K562 (cell line): ENCODE measurements at regions of chrX and their contacts with region 1.

Region 1: DNA sequence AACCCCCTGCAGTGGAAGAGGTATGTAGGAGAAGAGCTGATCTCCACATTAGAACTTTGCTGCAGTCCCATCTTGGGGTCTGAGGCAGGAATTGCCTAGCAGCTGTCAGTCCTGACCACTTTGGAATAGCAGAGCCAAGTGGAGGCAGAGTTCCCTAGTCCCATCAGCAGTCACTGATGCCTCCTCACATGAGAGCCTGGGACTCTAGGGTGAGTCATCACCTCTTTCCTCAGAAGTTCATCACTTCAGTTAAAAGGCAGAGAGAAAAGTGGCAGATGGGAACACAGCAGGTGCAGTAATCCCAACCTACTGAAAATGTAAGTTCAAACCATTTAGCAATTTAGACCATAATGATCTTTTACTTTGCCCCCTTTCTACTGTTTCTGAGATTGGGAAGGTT is 73.9 kb upstream of the MED14 start:
- DNase-seq: peak in 1 of 4 experiments; percentile 11
- ATAC-seq: no peak
- H3K4me3 ChIP-seq: no peak overlapping the region
- H3K27ac ChIP-seq: no peak overlapping the region; the same call in 2 of the 3 replicates
- H3K4me1 ChIP-seq: peaks cover 4 to 11% of the 10 kb centered on the region in 2 experiments; a peak in 4 of 5 replicates
- H3K27me3 ChIP-seq: no peaks in the 10 kb centered on the region
- CTCF ChIP-seq: no peak
- EP300 ChIP-seq: no peak
- POLR2A ChIP-seq: no peak
- RAD21 ChIP-seq: no peak

Region 2: GRCh38 chrX:40922307-40922706 is 113.1 kb after region 1 on chrX:
- CTCF ChIA-PET with region 1: no interaction called
- POLR2A ChIA-PET with region 1: no interaction called
- in situ Hi-C with region 1: no loop called
- intact Hi-C with region 1: loop called (anchors 10 kb)
- DNase-seq: peak; percentile 31 to 64 (median 34)
- ATAC-seq: peak; percentile 74
- H3K4me3 ChIP-seq: no peak overlapping the region
- H3K27ac ChIP-seq: no peak overlapping the region
- H3K4me1 ChIP-seq: no peaks in the 10 kb centered on the region
- H3K27me3 ChIP-seq: no peaks in the 10 kb centered on the region
- CTCF ChIP-seq: peak; percentile 35 to 55 (median 52)
- EP300 ChIP-seq: no peak
- POLR2A ChIP-seq: no peak
- RAD21 ChIP-seq: peak; percentile 12 to 59; a peak in 2 of 4 replicates

Region 3: GRCh38 chrX:41116948-41117347 is 307.7 kb after region 1 on chrX:
- CTCF ChIA-PET with region 1: no interaction called
- POLR2A ChIA-PET with region 1: no interaction called
- in situ Hi-C with region 1: no loop called
- intact Hi-C with region 1: loop called (anchors 10 kb)
- DNase-seq: peak in 2 of 4 experiments; percentile 10 to 22
- ATAC-seq: peak; percentile 59
- H3K4me3 ChIP-seq: no peak overlapping the region
- H3K27ac ChIP-seq: no peak overlapping the region
- H3K4me1 ChIP-seq: peaks cover 0 to 5% of the 10 kb centered on the region in 2 experiments; a peak in 2 of 5 replicates
- H3K27me3 ChIP-seq: no peaks in the 10 kb centered on the region
- CTCF ChIP-seq: no peak
- EP300 ChIP-seq: no peak
- POLR2A ChIP-seq: no peak
- RAD21 ChIP-seq: no peak